HepG2 (cell line): ENCODE measurements at regions of chr2 and their contacts with region 1.

Region 1: GRCh38 chr2:181715033-181715630 is 34.8 kb upstream of the NEUROD1 start:
- DNase-seq: peak; percentile 77
- ATAC-seq: peak; percentile 93
- H3K4me3 ChIP-seq: no peak overlapping the region
- H3K27ac ChIP-seq: no peak overlapping the region
- H3K4me1 ChIP-seq: no peaks in the 10 kb centered on the region
- H3K27me3 ChIP-seq: no peaks in the 10 kb centered on the region
- CTCF ChIP-seq: peak; percentile 91
- EP300 ChIP-seq: no peak
- POLR2A ChIP-seq: no peak
- RAD21 ChIP-seq: peak; percentile 79

Region 2: GRCh38 chr2:180125245-180125962 is 1589.7 kb before region 1 on chr2:
- CTCF ChIA-PET with region 1: interaction called, 22 read pairs
- POLR2A ChIA-PET with region 1: no interaction called
- in situ Hi-C with region 1: loop called (anchors 25 kb)
- intact Hi-C with region 1: no loop called
- DNase-seq: peak; percentile 78
- ATAC-seq: peak; percentile 96
- H3K4me3 ChIP-seq: no peak overlapping the region; a peak in 1 of 6 replicates
- H3K27ac ChIP-seq: no peak overlapping the region
- H3K4me1 ChIP-seq: peaks cover 5% of the 10 kb centered on the region; the same call in 1 of the 2 replicates
- H3K27me3 ChIP-seq: no peaks in the 10 kb centered on the region
- CTCF ChIP-seq: peak; percentile 67
- EP300 ChIP-seq: no peak
- POLR2A ChIP-seq: no peak
- RAD21 ChIP-seq: 0 out of 2 replicates have a peak, but pooled peaks have one; percentile 20

Region 3: DNA sequence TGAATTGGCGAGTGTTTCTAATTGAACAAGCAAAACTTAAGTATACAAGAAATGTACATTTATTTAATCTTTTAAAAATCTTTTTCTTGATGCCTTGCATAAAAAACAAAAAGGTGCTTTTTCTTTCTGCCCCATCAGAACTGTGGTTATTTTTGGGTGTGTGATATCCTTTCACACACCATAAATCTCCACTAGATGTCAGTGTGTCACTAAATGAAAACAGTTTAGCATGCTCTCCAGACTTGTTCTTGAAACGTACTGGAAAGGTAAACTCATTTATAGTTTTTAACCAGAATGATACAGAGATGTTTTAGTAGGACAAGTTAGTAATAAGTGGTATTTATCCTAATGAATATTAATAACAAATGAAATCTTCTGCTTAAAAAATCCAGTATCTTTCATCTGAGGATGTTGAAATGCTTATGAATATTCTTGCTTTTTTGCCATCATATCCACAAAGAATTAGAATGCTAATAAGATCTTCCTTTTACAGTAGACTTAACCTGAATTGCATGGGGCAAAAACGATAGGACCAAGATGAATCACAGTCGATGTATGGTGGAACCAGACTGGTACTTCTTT is 637.9 kb before region 1 on chr2:
- CTCF ChIA-PET with region 1: interaction called, 9 read pairs
- POLR2A ChIA-PET with region 1: no interaction called
- in situ Hi-C with region 1: no loop called
- intact Hi-C with region 1: loop called (anchors 1 kb)
- DNase-seq: peak; percentile 60
- ATAC-seq: peak; percentile 94
- H3K4me3 ChIP-seq: no peak overlapping the region
- H3K27ac ChIP-seq: no peak overlapping the region
- H3K4me1 ChIP-seq: no peaks in the 10 kb centered on the region
- H3K27me3 ChIP-seq: no peaks in the 10 kb centered on the region
- CTCF ChIP-seq: peak; percentile 77
- EP300 ChIP-seq: no peak
- POLR2A ChIP-seq: no peak
- RAD21 ChIP-seq: no peak; the same call in 1 of the 2 replicates

Region 4: DNA sequence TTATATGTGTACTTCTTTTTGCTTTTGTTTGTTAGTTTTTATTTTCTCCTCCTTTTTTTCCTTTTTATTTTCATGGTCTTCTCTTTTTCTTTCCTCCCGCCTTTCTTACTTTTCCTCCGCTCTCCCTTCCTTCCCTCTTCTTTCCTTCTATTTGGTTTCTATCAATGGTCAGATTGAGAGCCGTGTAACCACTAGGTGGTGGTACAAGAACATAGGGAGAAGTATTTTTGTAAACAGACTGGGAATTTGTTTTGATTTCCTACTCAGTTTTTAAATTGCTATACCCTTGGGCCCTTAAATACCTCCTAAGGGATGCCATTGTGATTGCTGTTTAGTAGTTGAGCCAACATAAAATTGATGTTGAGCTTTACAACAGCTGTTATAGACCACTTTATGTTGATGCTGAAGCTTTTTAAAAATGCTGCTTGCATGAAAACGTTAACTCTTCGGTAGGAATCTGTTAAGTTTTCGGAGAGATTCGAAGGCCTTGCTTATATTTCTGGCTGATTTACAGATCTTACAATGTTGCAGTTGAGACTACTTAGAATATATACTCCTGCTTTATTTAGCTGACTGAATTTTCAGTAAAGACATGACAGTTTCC is 610.5 kb before region 1 on chr2:
- CTCF ChIA-PET with region 1: interaction called, 7 read pairs
- POLR2A ChIA-PET with region 1: no interaction called
- in situ Hi-C with region 1: loop called (anchors 10 kb)
- intact Hi-C with region 1: loop called (anchors 1 kb)
- DNase-seq: peak; percentile 34
- ATAC-seq: peak; percentile 69
- H3K4me3 ChIP-seq: no peak overlapping the region
- H3K27ac ChIP-seq: no peak overlapping the region
- H3K4me1 ChIP-seq: no peaks in the 10 kb centered on the region
- H3K27me3 ChIP-seq: no peaks in the 10 kb centered on the region
- CTCF ChIP-seq: peak; percentile 71
- EP300 ChIP-seq: no peak
- POLR2A ChIP-seq: no peak
- RAD21 ChIP-seq: 0 out of 2 replicates have a peak, but pooled peaks have one; percentile 52

Region 5: GRCh38 chr2:181178823-181179412 is 536.2 kb before region 1 on chr2:
- CTCF ChIA-PET with region 1: no interaction called
- POLR2A ChIA-PET with region 1: no interaction called
- in situ Hi-C with region 1: no loop called
- intact Hi-C with region 1: loop called (anchors 1 kb)
- DNase-seq: peak; percentile 43
- ATAC-seq: peak; percentile 98
- H3K4me3 ChIP-seq: no peak overlapping the region
- H3K27ac ChIP-seq: no peak overlapping the region
- H3K4me1 ChIP-seq: no peaks in the 10 kb centered on the region
- H3K27me3 ChIP-seq: no peaks in the 10 kb centered on the region
- CTCF ChIP-seq: peak; percentile 64
- EP300 ChIP-seq: no peak
- POLR2A ChIP-seq: no peak
- RAD21 ChIP-seq: no peak

Region 6: DNA sequence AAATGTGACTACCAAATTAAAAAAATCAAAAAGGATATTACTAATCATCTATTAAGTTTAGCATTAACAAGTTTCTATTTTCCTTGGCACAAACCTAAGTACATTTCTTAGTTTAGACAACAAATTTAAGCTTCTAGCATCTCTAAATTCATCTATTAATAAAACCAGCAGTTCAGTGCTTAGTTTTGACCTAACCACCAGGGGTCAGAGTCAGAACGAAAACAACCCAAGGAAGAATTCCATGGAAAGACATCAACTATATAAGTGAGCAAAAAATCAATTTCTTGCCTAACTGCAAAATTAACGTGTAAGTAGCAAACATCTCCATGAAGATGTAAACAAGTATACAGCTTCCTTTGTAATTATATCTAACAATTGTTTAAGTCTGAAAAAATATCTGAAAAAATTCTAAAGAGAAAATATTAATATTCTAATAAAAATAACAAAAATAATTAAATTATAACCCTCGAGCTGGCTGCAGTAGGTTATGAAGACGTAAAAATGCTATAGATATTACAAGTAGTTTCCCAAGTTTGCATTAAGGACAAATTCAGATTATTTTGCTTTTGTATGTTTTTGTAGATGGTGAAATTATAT is 141.9 kb before region 1 on chr2:
- CTCF ChIA-PET with region 1: interaction called, 28 read pairs
- POLR2A ChIA-PET with region 1: no interaction called
- in situ Hi-C with region 1: no loop called
- intact Hi-C with region 1: loop called (anchors 1 kb)
- DNase-seq: peak; percentile 45
- ATAC-seq: peak; percentile 66; the same call in 2 of the 3 replicates
- H3K4me3 ChIP-seq: no peak overlapping the region
- H3K27ac ChIP-seq: no peak overlapping the region
- H3K4me1 ChIP-seq: no peaks in the 10 kb centered on the region
- H3K27me3 ChIP-seq: no peaks in the 10 kb centered on the region
- CTCF ChIP-seq: peak; percentile 60
- EP300 ChIP-seq: no peak
- POLR2A ChIP-seq: no peak
- RAD21 ChIP-seq: peak; percentile 38; the same call in 1 of the 2 replicates

Region 7: DNA sequence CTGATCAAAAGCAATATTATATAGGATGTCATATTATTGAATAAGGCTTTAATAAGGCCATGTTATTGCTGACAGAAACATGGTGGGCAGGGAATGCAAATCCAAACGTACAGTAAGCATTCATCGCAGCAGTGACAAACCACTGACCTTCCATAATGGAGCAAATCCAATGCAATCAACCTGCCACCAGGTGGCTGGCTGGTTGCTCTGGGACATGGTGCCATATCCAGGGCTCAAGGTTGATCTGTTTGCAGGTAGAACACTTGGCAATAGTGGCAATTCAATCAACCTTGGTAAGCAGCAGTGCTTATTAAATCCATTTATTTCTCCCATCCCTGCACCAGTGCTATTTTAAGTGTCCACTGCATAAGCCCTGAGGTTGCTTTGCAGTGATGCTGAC is 133.6 kb before region 1 on chr2:
- CTCF ChIA-PET with region 1: no interaction called
- POLR2A ChIA-PET with region 1: no interaction called
- in situ Hi-C with region 1: loop called (anchors 5 kb)
- intact Hi-C with region 1: no loop called
- DNase-seq: no peak
- ATAC-seq: peak; percentile 74
- H3K4me3 ChIP-seq: no peak overlapping the region
- H3K27ac ChIP-seq: no peak overlapping the region
- H3K4me1 ChIP-seq: peaks cover 1% of the 10 kb centered on the region; the same call in 1 of the 2 replicates
- H3K27me3 ChIP-seq: no peaks in the 10 kb centered on the region
- CTCF ChIP-seq: peak; percentile 41
- EP300 ChIP-seq: no peak
- POLR2A ChIP-seq: no peak
- RAD21 ChIP-seq: no peak

Region 8: GRCh38 chr2:181607629-181608590 is 107.2 kb before region 1 on chr2:
- CTCF ChIA-PET with region 1: no interaction called
- POLR2A ChIA-PET with region 1: no interaction called
- in situ Hi-C with region 1: no loop called
- intact Hi-C with region 1: no loop called
- DNase-seq: no peak
- ATAC-seq: no peak
- H3K4me3 ChIP-seq: no peak overlapping the region
- H3K27ac ChIP-seq: no peak overlapping the region
- H3K4me1 ChIP-seq: no peaks in the 10 kb centered on the region
- H3K27me3 ChIP-seq: no peaks in the 10 kb centered on the region
- CTCF ChIP-seq: no peak
- EP300 ChIP-seq: no peak
- POLR2A ChIP-seq: no peak
- RAD21 ChIP-seq: no peak